ENCODE measurements at regions of chr17 and their contacts with region 1.

Region 1: GRCh38 chr17:18987862-18988545 is 16.6 kb downstream of the FAM83G start:
- DNase-seq: no peak
- H3K4me3 ChIP-seq: no peak overlapping the region
- H3K27ac ChIP-seq: no peak overlapping the region
- H3K4me1 ChIP-seq: no peaks in the 10 kb centered on the region
- H3K27me3 ChIP-seq: no peaks in the 10 kb centered on the region
- CTCF ChIP-seq: no peak
- POLR2A ChIP-seq: no peak

Region 2: GRCh38 chr17:17496189-17497064 is 1491.6 kb before region 1 on chr17 and contains the start of gene RASD1:
- intact Hi-C with region 1: no loop called
- DNase-seq: peak; percentile 87 to 96
- H3K4me3 ChIP-seq: peak within 1 kb of the TSS; percentile 65 to 77 (median 70)
- H3K27ac ChIP-seq: peak within 1 kb of the TSS; percentile 80 to 83
- H3K4me1 ChIP-seq: no peaks in the 10 kb centered on the region
- H3K27me3 ChIP-seq: no peaks in the 10 kb centered on the region
- CTCF ChIP-seq: peak; percentile 58 to 94 (median 70)
- POLR2A ChIP-seq: peak; percentile 93
- total RNA-seq, gene RASD1: 64.0 to 140 (median 75.0) TPM

Region 3: GRCh38 chr17:18946531-18946930 is 41.5 kb before region 1 on chr17:
- intact Hi-C with region 1: no loop called
- DNase-seq: no peak
- H3K4me3 ChIP-seq: no peak overlapping the region
- H3K27ac ChIP-seq: no peak overlapping the region
- H3K4me1 ChIP-seq: no peaks in the 10 kb centered on the region
- H3K27me3 ChIP-seq: peaks cover 0 to 15% of the 10 kb centered on the region in 2 donors
- CTCF ChIP-seq: no peak
- POLR2A ChIP-seq: no peak

Region 4: GRCh38 chr17:18961607-18962493 is 26.2 kb before region 1 on chr17:
- intact Hi-C with region 1: loop called (anchors 1 kb)
- DNase-seq: no peak
- H3K4me3 ChIP-seq: no peak overlapping the region
- H3K27ac ChIP-seq: no peak overlapping the region
- H3K4me1 ChIP-seq: no peaks in the 10 kb centered on the region
- H3K27me3 ChIP-seq: no peaks in the 10 kb centered on the region
- CTCF ChIP-seq: no peak
- POLR2A ChIP-seq: no peak